ENCODE measurements at regions of chr22 and their contacts with region 1.

Region 1: DNA sequence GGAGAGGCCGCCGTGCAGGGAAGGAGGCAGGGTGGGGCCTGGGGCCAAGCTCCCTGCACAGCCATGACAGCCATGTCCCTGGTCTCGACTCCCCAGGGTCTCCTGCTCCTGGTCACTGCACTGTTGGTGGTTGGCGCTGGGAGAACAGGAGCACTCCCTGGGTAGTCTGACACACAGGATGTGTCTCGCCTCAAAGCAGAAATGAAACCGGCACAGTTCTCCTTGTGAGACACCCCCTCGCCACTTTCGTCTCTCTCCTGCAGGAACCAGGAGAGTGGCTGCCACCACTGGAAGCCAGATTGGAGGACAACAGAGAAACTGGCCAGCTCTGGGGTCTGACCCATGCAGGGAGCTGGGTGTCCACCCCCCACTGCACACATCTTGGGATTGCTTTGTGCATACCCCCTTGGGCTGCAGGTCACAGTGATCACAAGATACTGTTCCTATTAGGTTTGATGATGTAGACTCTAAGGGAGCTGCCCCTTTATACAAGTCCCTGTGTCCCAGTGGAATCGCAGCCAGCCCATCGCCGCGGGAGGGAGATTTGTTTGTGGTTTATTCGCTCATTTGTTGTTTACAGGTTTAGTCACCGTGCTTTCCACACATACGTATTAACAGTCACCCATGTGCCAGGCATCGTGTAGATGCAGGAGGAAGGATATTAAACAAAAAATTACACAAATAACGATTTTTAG is 27.0 kb upstream of the YWHAH start:
- DNase-seq: peak in 1 of 2 donors; percentile 5
- ATAC-seq: no peak
- H3K4me3 ChIP-seq: no peak overlapping the region
- H3K27ac ChIP-seq: no peak overlapping the region
- H3K4me1 ChIP-seq: peaks cover 0 to 3% of the 10 kb centered on the region in 2 donors
- H3K27me3 ChIP-seq: no peaks in the 10 kb centered on the region
- CTCF ChIP-seq: no peak
- POLR2A ChIP-seq: no peak

Region 2: DNA sequence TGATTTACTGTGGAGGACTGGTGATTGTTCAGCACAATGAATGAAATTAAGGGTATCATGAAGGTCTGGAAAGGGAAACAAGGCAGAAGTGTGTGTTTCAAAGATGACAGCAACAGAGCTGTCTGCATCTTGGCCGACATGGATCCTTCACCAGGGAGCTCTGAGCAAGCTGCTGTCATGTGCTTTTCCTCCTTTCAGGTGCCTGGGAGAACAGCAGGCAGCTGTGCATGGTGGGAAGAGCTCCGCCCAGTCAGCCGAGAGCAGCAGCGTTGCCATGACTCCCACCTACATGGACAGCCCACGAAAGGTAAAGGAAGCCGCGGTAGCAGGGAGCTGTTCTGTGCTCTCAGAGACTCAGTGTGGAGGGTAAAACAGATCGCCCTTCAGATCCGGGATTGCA is 60.1 kb before region 1 on chr22:
- in situ Hi-C with region 1: loop called in 1 of 4 experiments (anchors 10 kb)
- intact Hi-C with region 1: no loop called
- DNase-seq: no peak
- ATAC-seq: no peak
- H3K4me3 ChIP-seq: no peak overlapping the region
- H3K27ac ChIP-seq: no peak overlapping the region
- H3K4me1 ChIP-seq: no peaks in the 10 kb centered on the region
- H3K27me3 ChIP-seq: no peaks in the 10 kb centered on the region
- CTCF ChIP-seq: no peak
- POLR2A ChIP-seq: no peak

Region 3: GRCh38 chr22:32005453-32005852 is 88.1 kb after region 1 on chr22:
- in situ Hi-C with region 1: no loop called
- intact Hi-C with region 1: no loop called
- DNase-seq: no peak
- ATAC-seq: no peak
- H3K4me3 ChIP-seq: no peak overlapping the region
- H3K27ac ChIP-seq: no peak overlapping the region
- H3K4me1 ChIP-seq: no peaks in the 10 kb centered on the region
- H3K27me3 ChIP-seq: peaks cover 0 to 5% (median 0%) of the 10 kb centered on the region in 3 donors
- CTCF ChIP-seq: no peak
- POLR2A ChIP-seq: no peak